ENCODE measurements at regions of chrX and their contacts with region 1.

Region 1: DNA sequence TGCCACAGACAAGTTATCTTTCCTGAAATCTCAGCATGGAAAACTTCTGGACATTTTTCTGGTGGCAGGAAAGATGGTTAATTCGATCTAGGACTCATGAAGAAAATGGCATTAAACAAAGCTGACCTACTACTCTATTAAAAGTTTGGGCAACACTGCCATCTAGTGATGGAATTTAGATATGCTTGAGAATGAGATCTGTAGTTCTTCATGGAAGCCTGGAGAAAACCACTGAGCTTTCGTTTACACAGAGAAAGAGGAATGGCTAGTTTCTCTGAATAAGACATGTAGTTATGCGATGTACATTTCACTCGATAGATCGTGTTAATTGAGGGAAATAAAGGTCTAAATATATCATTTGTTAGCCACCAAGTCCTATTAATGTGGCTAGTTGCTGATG is 51.7 kb upstream of the CHRDL1 start:
- DNase-seq: peak; percentile 40
- H3K4me3 Mint-ChIP-seq: no peak overlapping the region
- H3K27ac Mint-ChIP-seq: no peak overlapping the region
- H3K4me1 Mint-ChIP-seq: no peaks in the 10 kb centered on the region
- H3K27me3 Mint-ChIP-seq: peaks cover 22% of the 10 kb centered on the region
- CTCF ChIP-seq: no peak

Region 2: GRCh38 chrX:110450050-110450449 is 397.3 kb before region 1 on chrX:
- CTCF ChIA-PET with region 1: no interaction called
- intact Hi-C with region 1: loop called (anchors 1 kb)
- DNase-seq: peak; percentile 70
- H3K4me3 Mint-ChIP-seq: no peak overlapping the region
- H3K27ac Mint-ChIP-seq: no peak overlapping the region
- H3K4me1 Mint-ChIP-seq: no peaks in the 10 kb centered on the region
- H3K27me3 Mint-ChIP-seq: peaks cover 63% of the 10 kb centered on the region
- CTCF ChIP-seq: peak; percentile 39

Region 3: DNA sequence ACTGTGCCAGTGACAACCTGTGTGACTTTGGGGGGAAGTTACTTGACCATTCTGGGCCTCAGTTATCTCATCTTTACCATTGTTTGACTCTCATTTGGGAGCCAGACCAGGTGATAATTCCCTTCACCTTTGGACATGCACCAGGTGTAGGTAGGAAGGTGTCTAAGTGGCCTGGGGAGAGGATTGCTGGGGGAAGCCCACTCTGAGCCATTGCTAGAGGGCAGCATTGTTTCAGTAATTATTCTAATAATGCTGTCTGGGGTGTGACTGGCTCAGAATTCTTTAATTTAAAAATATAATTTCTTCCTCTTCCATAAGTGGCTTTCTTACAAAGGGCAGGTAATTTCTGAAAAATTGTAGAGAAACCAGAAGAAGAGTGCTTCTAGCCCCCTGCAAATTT is 384.4 kb before region 1 on chrX:
- CTCF ChIA-PET with region 1: interaction called, 3 read pairs
- intact Hi-C with region 1: loop called (anchors 1 kb)
- DNase-seq: peak; percentile 2
- H3K4me3 Mint-ChIP-seq: no peak overlapping the region
- H3K27ac Mint-ChIP-seq: no peak overlapping the region
- H3K4me1 Mint-ChIP-seq: no peaks in the 10 kb centered on the region
- H3K27me3 Mint-ChIP-seq: peaks cover 25% of the 10 kb centered on the region
- CTCF ChIP-seq: no peak

Region 4: GRCh38 chrX:110588164-110588563 is 259.2 kb before region 1 on chrX:
- CTCF ChIA-PET with region 1: interaction called, 4 read pairs
- intact Hi-C with region 1: loop called (anchors 1 kb)
- DNase-seq: no peak
- H3K4me3 Mint-ChIP-seq: no peak overlapping the region
- H3K27ac Mint-ChIP-seq: no peak overlapping the region
- H3K4me1 Mint-ChIP-seq: no peaks in the 10 kb centered on the region
- H3K27me3 Mint-ChIP-seq: peaks cover 7% of the 10 kb centered on the region
- CTCF ChIP-seq: no peak

Region 5: GRCh38 chrX:110665223-110666002 is 181.9 kb before region 1 on chrX:
- CTCF ChIA-PET with region 1: no interaction called
- intact Hi-C with region 1: loop called (anchors 5 kb)
- DNase-seq: peak; percentile 69
- H3K4me3 Mint-ChIP-seq: no peak overlapping the region
- H3K27ac Mint-ChIP-seq: no peak overlapping the region
- H3K4me1 Mint-ChIP-seq: no peaks in the 10 kb centered on the region
- H3K27me3 Mint-ChIP-seq: peaks cover 10% of the 10 kb centered on the region
- CTCF ChIP-seq: peak; percentile 45

Measured in Calu3 (cell line).